Activated CD8-positive, alpha-beta T cell treated with anti-CD3 and anti-CD28 coated beads, Interleukin-2, amount 10 ng/mL, durations not matched to agents 7 days and 5 days (primary cell): ENCODE measurements at regions of chr18 and their contacts with region 1.

Region 1: GRCh38 chr18:74631623-74632283 is 34.1 kb downstream of the ZNF407 start:
- DNase-seq: peak; percentile 44
- ATAC-seq: peak; percentile 90
- H3K4me3 Mint-ChIP-seq: peak overlapping the region; percentile 65
- H3K27ac Mint-ChIP-seq: peak overlapping the region; percentile 90
- H3K4me1 Mint-ChIP-seq: peaks cover 28% of the 10 kb centered on the region
- H3K27me3 Mint-ChIP-seq: no peaks in the 10 kb centered on the region

Region 2: DNA sequence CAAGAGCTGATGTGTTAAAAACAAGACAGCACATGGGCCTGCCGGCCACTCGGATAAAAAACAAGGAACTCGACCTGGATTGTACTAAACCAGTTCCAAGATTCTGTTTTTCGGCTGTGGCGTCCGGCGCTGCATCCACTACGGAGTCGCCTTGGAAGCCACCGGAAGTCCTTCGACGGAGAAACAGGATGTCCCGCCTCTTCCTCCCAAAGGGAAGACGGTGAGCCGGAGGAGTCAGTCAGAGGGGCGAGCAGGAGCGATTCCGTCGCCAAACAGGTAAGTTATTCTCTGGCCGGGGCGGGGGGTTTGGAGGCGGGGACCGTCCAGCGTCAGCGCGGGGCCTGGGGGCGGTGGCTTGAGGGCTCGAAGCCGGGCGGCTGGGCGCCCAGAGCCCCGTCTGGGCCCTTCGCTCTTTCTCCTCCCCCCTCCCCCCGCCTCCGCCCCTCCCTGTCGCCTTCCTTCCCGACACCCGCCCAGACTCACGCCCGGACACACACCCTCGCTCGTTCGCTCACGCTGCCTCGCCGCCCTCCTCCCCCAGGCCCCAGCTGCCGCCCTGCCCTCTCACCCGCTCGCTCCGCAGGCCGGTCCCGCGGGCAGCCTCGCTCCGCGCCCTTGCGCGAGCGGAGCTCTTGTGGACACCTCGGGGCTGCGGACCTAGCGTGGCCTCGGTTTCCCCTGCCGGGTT is 33.9 kb before region 1 on chr18 and contains the start of gene ZNF407:
- CTCF ChIA-PET with region 1: interaction called, 8 read pairs
- POLR2A ChIA-PET with region 1: interaction called, 23 read pairs
- DNase-seq: peak; percentile 91
- ATAC-seq: peak; percentile 85
- H3K4me3 Mint-ChIP-seq: peak within 1 kb of the TSS; percentile 96
- H3K27ac Mint-ChIP-seq: peak within 1 kb of the TSS; percentile 99
- H3K4me1 Mint-ChIP-seq: peaks cover 45% of the 10 kb centered on the region
- H3K27me3 Mint-ChIP-seq: no peaks in the 10 kb centered on the region
- total RNA-seq, gene ZNF407: 16.6 to 17.0 TPM